Naive thymus-derived CD4-positive, alpha-beta T cell (primary cell): ENCODE measurements at regions of chr6 and their contacts with region 1.

Region 1: GRCh38 chr6:116444092-116444491 is 17.1 kb upstream of the CALHM6 start:
- DNase-seq: peak in 3 of 9 donors; percentile 7 to 27 (median 20)
- ATAC-seq: peak; percentile 76
- H3K4me3 ChIP-seq: no peak overlapping the region
- H3K4me3 Mint-ChIP-seq: peak overlapping the region in 1 of 10 donors; percentile 36
- H3K27ac ChIP-seq: no peak overlapping the region
- H3K27ac Mint-ChIP-seq: peak overlapping the region in 1 of 9 donors; percentile 25
- H3K4me1 ChIP-seq: peaks cover 0 to 4% of the 10 kb centered on the region in 2 donors
- H3K4me1 Mint-ChIP-seq: peaks cover 0 to 32% (median 0%) of the 10 kb centered on the region in 7 donors
- H3K27me3 ChIP-seq: no peaks in the 10 kb centered on the region
- H3K27me3 Mint-ChIP-seq: peaks cover 8 to 28% (median 20%) of the 10 kb centered on the region in 5 donors

Region 2: GRCh38 chr6:115728171-115728570 is 715.9 kb before region 1 on chr6:
- CTCF ChIA-PET with region 1: no interaction called
- POLR2A ChIA-PET with region 1: no interaction called
- intact Hi-C with region 1: no loop called
- DNase-seq: no peak
- ATAC-seq: no peak
- H3K4me3 ChIP-seq: no peak overlapping the region
- H3K4me3 Mint-ChIP-seq: no peak overlapping the region
- H3K27ac ChIP-seq: no peak overlapping the region
- H3K27ac Mint-ChIP-seq: no peak overlapping the region
- H3K4me1 ChIP-seq: no peaks in the 10 kb centered on the region
- H3K4me1 Mint-ChIP-seq: no peaks in the 10 kb centered on the region
- H3K27me3 ChIP-seq: no peaks in the 10 kb centered on the region
- H3K27me3 Mint-ChIP-seq: no peaks in the 10 kb centered on the region

Region 3: DNA sequence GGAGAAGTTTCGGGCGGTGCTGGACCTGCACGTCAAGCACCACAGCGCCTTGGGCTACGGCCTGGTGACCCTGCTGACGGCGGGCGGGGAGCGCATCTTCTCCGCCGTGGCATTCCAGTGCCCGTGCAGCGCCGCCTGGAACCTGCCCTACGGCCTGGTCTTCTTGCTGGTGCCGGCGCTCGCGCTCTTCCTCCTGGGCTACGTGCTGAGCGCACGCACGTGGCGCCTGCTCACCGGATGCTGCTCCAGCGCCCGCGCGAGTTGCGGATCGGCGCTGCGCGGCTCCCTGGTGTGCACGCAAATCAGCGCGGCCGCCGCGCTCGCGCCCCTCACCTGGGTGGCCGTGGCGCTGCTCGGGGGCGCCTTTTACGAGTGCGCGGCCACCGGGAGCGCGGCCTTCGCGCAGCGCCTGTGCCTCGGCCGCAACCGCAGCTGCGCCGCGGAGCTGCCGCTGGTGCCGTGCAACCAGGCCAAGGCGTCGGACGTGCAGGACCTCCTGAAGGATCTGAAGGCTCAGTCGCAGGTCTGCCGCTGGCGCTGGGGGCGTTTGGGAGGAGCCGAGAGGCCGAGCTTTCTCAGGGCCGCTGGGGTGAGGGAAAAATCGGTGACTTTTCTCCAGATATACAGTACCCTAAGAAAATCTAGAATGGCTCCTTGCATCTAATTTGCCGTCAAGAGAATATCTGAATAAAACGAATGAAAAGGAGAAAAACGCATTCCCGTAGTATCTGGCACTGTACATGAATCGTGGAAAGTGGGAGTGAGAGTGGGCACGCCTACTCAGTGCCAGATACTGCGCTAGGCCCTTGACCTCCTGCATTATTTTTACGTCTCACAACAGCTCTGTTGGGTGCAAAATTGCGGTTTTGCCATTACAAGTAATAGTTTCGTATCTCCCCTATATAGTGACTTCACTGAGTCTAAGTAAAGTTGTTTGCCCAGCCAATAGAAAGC is 18.1 kb after region 1 on chr6:
- CTCF ChIA-PET with region 1: interaction called, 3 read pairs
- POLR2A ChIA-PET with region 1: no interaction called
- intact Hi-C with region 1: loop called in 1 of 2 experiments (anchors 1 kb)
- DNase-seq: peak; percentile 25 to 71 (median 62)
- ATAC-seq: peak; percentile 89
- H3K4me3 ChIP-seq: peak overlapping the region; percentile 58
- H3K4me3 Mint-ChIP-seq: peak overlapping the region; percentile 76 to 87 (median 80)
- H3K27ac ChIP-seq: no peak overlapping the region
- H3K27ac Mint-ChIP-seq: peak overlapping the region in 7 of 9 donors; percentile 33 to 92 (median 76)
- H3K4me1 ChIP-seq: peaks cover 7 to 16% of the 10 kb centered on the region in 2 donors
- H3K4me1 Mint-ChIP-seq: peaks cover 17 to 88% (median 26%) of the 10 kb centered on the region in 7 donors
- H3K27me3 ChIP-seq: no peaks in the 10 kb centered on the region
- H3K27me3 Mint-ChIP-seq: peaks cover 0 to 39% (median 4%) of the 10 kb centered on the region in 5 donors

Region 4: GRCh38 chr6:116476002-116476678 is 32.0 kb after region 1 on chr6:
- CTCF ChIA-PET with region 1: no interaction called
- POLR2A ChIA-PET with region 1: no interaction called
- intact Hi-C with region 1: loop called in 1 of 2 experiments (anchors 1 kb)
- DNase-seq: peak in 5 of 9 donors; percentile 23 to 45 (median 28)
- ATAC-seq: peak; percentile 93
- H3K4me3 ChIP-seq: peak overlapping the region; percentile 45
- H3K4me3 Mint-ChIP-seq: peak overlapping the region in 8 of 10 donors; percentile 2 to 69 (median 56)
- H3K27ac ChIP-seq: no peak overlapping the region
- H3K27ac Mint-ChIP-seq: peak overlapping the region in 3 of 9 donors; percentile 15 to 80 (median 69)
- H3K4me1 ChIP-seq: peaks cover 4 to 17% of the 10 kb centered on the region in 2 donors
- H3K4me1 Mint-ChIP-seq: peaks cover 19 to 31% (median 24%) of the 10 kb centered on the region in 7 donors
- H3K27me3 ChIP-seq: no peaks in the 10 kb centered on the region
- H3K27me3 Mint-ChIP-seq: peaks cover 0 to 22% (median 2%) of the 10 kb centered on the region in 5 donors

Region 5: DNA sequence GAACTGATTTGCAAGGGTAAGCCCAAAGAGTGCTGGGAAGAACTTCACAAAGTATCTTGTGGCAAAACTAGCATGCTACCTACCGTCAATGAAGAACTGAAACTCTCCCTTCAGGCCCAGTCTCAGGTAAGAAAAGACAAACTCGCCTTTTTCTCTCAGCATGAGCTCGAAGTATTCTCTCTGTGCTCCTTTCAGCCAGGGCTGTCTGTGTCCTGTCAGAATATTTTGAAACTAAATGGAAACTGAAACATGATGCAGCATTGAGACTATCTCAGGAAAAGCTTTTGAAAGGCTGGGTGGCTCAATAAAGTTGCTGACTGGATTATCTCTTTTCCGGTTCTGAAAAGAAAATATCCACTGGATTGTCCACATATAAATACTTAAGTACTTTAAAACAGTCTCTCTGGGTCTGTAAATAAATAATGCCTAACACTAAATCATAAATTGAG is 68.0 kb after region 1 on chr6:
- CTCF ChIA-PET with region 1: no interaction called
- POLR2A ChIA-PET with region 1: no interaction called
- intact Hi-C with region 1: no loop called
- DNase-seq: no peak
- ATAC-seq: no peak
- H3K4me3 ChIP-seq: no peak overlapping the region
- H3K4me3 Mint-ChIP-seq: no peak overlapping the region
- H3K27ac ChIP-seq: no peak overlapping the region
- H3K27ac Mint-ChIP-seq: no peak overlapping the region
- H3K4me1 ChIP-seq: no peaks in the 10 kb centered on the region
- H3K4me1 Mint-ChIP-seq: no peaks in the 10 kb centered on the region
- H3K27me3 ChIP-seq: no peaks in the 10 kb centered on the region
- H3K27me3 Mint-ChIP-seq: peaks cover 0 to 51% (median 0%) of the 10 kb centered on the region in 5 donors